SK-N-SH (cell line): ENCODE measurements at regions of chr14 and their contacts with region 1.

Region 1: DNA sequence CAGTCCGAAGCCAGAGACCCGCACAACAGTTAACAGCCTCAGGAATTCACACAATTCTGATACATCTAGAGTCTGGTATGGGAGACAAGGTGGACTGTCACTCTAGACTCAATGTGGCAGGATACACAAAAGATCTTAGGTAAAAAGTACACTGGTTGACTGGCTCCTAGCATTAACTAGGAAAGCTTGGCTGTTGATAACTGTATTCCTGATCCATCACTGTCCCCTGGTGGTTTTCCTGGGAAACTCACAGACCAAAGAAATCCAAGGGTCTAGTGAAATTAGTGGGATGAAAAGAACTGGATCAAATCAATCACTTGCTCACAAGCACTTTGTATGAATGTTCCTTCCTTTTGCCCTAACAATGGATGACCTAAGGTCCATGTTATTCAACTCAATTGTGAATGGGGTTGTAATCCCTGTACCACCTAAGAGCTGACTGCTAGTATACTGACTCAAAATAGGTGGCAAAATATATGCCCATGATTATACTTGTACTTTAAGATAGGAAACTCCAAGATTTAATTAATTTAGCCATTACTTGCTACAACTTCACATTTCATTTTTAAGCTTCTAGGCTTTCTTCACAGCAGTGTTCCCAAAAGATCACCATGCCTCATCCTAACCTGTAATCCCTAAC is 14.0 kb downstream of the NPC2 start:
- DNase-seq: peak; percentile 67
- H3K4me3 ChIP-seq: peak overlapping the region in 1 of 2 experiments; percentile 43; a peak in 1 of 4 replicates
- H3K27ac ChIP-seq: no peak overlapping the region
- H3K4me1 ChIP-seq: peaks cover 0 to 4% of the 10 kb centered on the region in 2 experiments; a peak in 1 of 4 replicates
- H3K27me3 ChIP-seq: no peaks in the 10 kb centered on the region
- CTCF ChIP-seq: peak; percentile 83
- EP300 ChIP-seq: no peak
- RAD21 ChIP-seq: peak; percentile 97

Region 2: GRCh38 chr14:74324931-74325361 is 154.2 kb before region 1 on chr14:
- CTCF ChIA-PET with region 1: interaction called, 37 read pairs
- POLR2A ChIA-PET with region 1: no interaction called
- DNase-seq: peak; percentile 73
- H3K4me3 ChIP-seq: no peak overlapping the region
- H3K27ac ChIP-seq: no peak overlapping the region
- H3K4me1 ChIP-seq: no peaks in the 10 kb centered on the region
- H3K27me3 ChIP-seq: no peaks in the 10 kb centered on the region
- CTCF ChIP-seq: peak; percentile 72
- EP300 ChIP-seq: no peak
- RAD21 ChIP-seq: peak; percentile 69

Region 3: GRCh38 chr14:74349757-74350156 is 129.4 kb before region 1 on chr14:
- CTCF ChIA-PET with region 1: interaction called, 249 read pairs
- POLR2A ChIA-PET with region 1: no interaction called
- DNase-seq: no peak
- H3K4me3 ChIP-seq: no peak overlapping the region
- H3K27ac ChIP-seq: no peak overlapping the region
- H3K4me1 ChIP-seq: no peaks in the 10 kb centered on the region
- H3K27me3 ChIP-seq: peaks cover 20% of the 10 kb centered on the region; the same call in 1 of the 2 replicates
- CTCF ChIP-seq: no peak
- EP300 ChIP-seq: no peak
- RAD21 ChIP-seq: no peak

Region 4: DNA sequence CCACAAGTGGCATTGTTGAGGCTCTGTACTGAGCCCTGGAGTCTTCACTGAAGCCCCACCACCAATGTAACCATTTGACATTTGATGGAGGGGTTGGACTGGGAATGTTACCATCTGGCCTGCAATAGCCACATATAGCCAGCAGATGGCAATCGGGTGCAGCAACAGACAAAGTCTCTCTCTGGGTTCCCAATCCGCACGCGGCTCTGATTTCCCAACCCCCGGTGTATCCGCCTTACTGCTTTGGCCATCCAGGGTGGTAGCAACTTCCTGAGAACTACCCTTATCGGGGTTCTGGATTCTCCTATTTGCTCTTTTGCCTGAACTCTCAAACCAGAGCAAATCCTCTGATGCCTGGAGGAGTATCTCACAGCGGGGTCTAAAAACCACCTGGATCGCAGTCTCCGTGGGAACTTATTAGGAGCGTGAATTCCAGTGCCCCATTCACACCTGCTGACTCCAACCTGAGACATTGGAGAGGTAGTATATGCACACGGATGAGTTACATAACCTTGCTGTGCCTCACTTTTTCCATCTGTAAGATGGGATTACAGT is 116.7 kb before region 1 on chr14:
- CTCF ChIA-PET with region 1: interaction called, 249 read pairs
- POLR2A ChIA-PET with region 1: no interaction called
- DNase-seq: peak; percentile 88
- H3K4me3 ChIP-seq: peak overlapping the region in 1 of 2 experiments; percentile 41; a peak in 1 of 4 replicates
- H3K27ac ChIP-seq: no peak overlapping the region
- H3K4me1 ChIP-seq: no peaks in the 10 kb centered on the region; a peak in 1 of 4 replicates
- H3K27me3 ChIP-seq: no peaks in the 10 kb centered on the region; the same call in 1 of the 2 replicates
- CTCF ChIP-seq: peak; percentile 91
- EP300 ChIP-seq: no peak
- RAD21 ChIP-seq: peak; percentile 95

Region 5: GRCh38 chr14:74459289-74459946 is 19.7 kb before region 1 on chr14:
- CTCF ChIA-PET with region 1: interaction called, 14 read pairs
- POLR2A ChIA-PET with region 1: no interaction called
- DNase-seq: peak; percentile 54
- H3K4me3 ChIP-seq: no peak overlapping the region
- H3K27ac ChIP-seq: no peak overlapping the region
- H3K4me1 ChIP-seq: no peaks in the 10 kb centered on the region
- H3K27me3 ChIP-seq: peaks cover 6% of the 10 kb centered on the region; the same call in 1 of the 2 replicates
- CTCF ChIP-seq: peak; percentile 67
- EP300 ChIP-seq: no peak
- RAD21 ChIP-seq: peak; percentile 36

Region 6: GRCh38 chr14:74464785-74465184 is 14.3 kb before region 1 on chr14:
- CTCF ChIA-PET with region 1: interaction called, 25 read pairs
- POLR2A ChIA-PET with region 1: no interaction called
- DNase-seq: no peak
- H3K4me3 ChIP-seq: no peak overlapping the region
- H3K27ac ChIP-seq: no peak overlapping the region
- H3K4me1 ChIP-seq: no peaks in the 10 kb centered on the region
- H3K27me3 ChIP-seq: no peaks in the 10 kb centered on the region
- CTCF ChIP-seq: no peak
- EP300 ChIP-seq: no peak
- RAD21 ChIP-seq: no peak

Region 7: GRCh38 chr14:74516451-74517155 is 37.5 kb after region 1 on chr14:
- CTCF ChIA-PET with region 1: no interaction called
- POLR2A ChIA-PET with region 1: no interaction called
- DNase-seq: no peak
- H3K4me3 ChIP-seq: no peak overlapping the region
- H3K27ac ChIP-seq: no peak overlapping the region
- H3K4me1 ChIP-seq: peaks cover 0 to 12% of the 10 kb centered on the region in 2 experiments; a peak in 1 of 4 replicates
- H3K27me3 ChIP-seq: no peaks in the 10 kb centered on the region
- CTCF ChIP-seq: no peak
- EP300 ChIP-seq: no peak
- RAD21 ChIP-seq: no peak

Region 8: DNA sequence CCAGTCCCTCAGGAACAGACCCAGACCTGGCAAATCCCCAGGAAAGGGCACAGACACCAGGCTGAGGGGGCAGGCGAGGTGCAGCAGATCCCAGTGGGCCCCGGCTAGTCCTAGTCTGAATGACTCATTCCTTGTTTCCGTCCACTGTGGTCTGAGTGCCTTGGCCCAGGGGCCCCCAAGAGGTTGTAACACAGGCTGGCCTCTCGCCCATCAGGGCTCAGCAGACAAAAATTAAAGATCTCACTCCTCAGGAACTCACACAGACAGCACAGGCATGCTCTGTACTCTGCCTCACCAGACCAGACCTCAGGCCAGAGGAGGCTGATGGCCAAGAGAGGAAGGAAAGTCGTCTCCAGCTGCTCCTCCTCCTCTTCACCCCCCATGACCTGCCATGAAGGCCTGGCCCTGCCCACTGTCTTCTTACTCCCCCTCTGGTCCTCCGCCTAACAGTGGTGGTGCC is 140.6 kb after region 1 on chr14:
- CTCF ChIA-PET with region 1: no interaction called
- POLR2A ChIA-PET with region 1: no interaction called
- DNase-seq: no peak
- H3K4me3 ChIP-seq: no peak overlapping the region
- H3K27ac ChIP-seq: peak overlapping the region; percentile 72 to 99
- H3K4me1 ChIP-seq: peaks cover 14 to 49% of the 10 kb centered on the region in 2 experiments; a peak in 3 of 4 replicates
- H3K27me3 ChIP-seq: no peaks in the 10 kb centered on the region
- CTCF ChIP-seq: no peak
- EP300 ChIP-seq: peak; percentile 36 to 99; a peak in 3 of 4 replicates
- RAD21 ChIP-seq: no peak

Region 9: GRCh38 chr14:74807853-74808545 is 328.9 kb after region 1 on chr14:
- CTCF ChIA-PET with region 1: no interaction called
- POLR2A ChIA-PET with region 1: no interaction called
- DNase-seq: no peak
- H3K4me3 ChIP-seq: no peak overlapping the region
- H3K27ac ChIP-seq: no peak overlapping the region
- H3K4me1 ChIP-seq: no peaks in the 10 kb centered on the region
- H3K27me3 ChIP-seq: no peaks in the 10 kb centered on the region
- CTCF ChIP-seq: no peak
- EP300 ChIP-seq: no peak
- RAD21 ChIP-seq: no peak